ENCODE measurements at regions of chr1 and their contacts with region 1.

Region 1: GRCh38 chr1:84936116-84936810 is 43.3 kb upstream of the LPAR3 start:
- DNase-seq: peak; percentile 20 to 56
- H3K4me3 ChIP-seq: no peak overlapping the region
- H3K27ac ChIP-seq: no peak overlapping the region
- H3K4me1 ChIP-seq: no peaks in the 10 kb centered on the region
- H3K27me3 ChIP-seq: no peaks in the 10 kb centered on the region
- CTCF ChIP-seq: peak; percentile 98

Region 2: GRCh38 chr1:84772428-84772943 is 163.8 kb before region 1 on chr1:
- CTCF ChIA-PET with region 1: no interaction called
- POLR2A ChIA-PET with region 1: no interaction called
- intact Hi-C with region 1: loop called (anchors 5 kb)
- DNase-seq: peak; percentile 53 to 65
- H3K4me3 ChIP-seq: no peak overlapping the region
- H3K27ac ChIP-seq: no peak overlapping the region
- H3K4me1 ChIP-seq: no peaks in the 10 kb centered on the region
- H3K27me3 ChIP-seq: no peaks in the 10 kb centered on the region
- CTCF ChIP-seq: peak; percentile 98